CD4-positive, alpha-beta T cell (primary cell): ENCODE measurements at regions of chr12 and their contacts with region 1.

Region 1: DNA sequence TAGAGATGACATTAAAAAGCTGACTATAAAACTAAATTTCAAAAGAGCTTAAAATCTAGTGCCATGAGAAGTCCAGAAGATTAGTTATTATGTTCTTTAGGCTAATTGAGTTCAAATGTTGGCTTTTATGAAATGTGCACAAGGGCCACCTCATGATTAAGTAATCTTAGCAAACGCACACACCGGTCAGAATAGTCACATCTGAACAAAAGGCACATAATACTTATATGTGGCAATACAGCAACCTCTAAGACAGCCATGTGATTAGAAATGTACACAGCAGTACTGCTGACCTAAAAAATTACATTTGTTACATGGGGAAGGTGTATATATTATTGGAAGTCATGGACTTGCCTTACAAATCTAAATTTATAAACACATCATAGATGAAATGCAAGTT is 344.7 kb upstream of the GARIN6 start:
- DNase-seq: no peak
- ATAC-seq: no peak
- H3K4me3 ChIP-seq: no peak overlapping the region
- H3K4me3 Mint-ChIP-seq: no peak overlapping the region
- H3K27ac ChIP-seq: no peak overlapping the region
- H3K27ac Mint-ChIP-seq: no peak overlapping the region
- H3K4me1 ChIP-seq: no peaks in the 10 kb centered on the region
- H3K4me1 Mint-ChIP-seq: no peaks in the 10 kb centered on the region
- H3K27me3 ChIP-seq: no peaks in the 10 kb centered on the region
- H3K27me3 Mint-ChIP-seq: no peaks in the 10 kb centered on the region
- CTCF ChIP-seq: no peak

Region 2: GRCh38 chr12:99271071-99271470 is 31.8 kb before region 1 on chr12:
- CTCF ChIA-PET with region 1: no interaction called
- POLR2A ChIA-PET with region 1: no interaction called
- intact Hi-C with region 1: loop called in 1 of 2 experiments (anchors 2 kb)
- DNase-seq: no peak
- ATAC-seq: no peak
- H3K4me3 ChIP-seq: no peak overlapping the region
- H3K4me3 Mint-ChIP-seq: no peak overlapping the region
- H3K27ac ChIP-seq: no peak overlapping the region
- H3K27ac Mint-ChIP-seq: no peak overlapping the region
- H3K4me1 ChIP-seq: no peaks in the 10 kb centered on the region
- H3K4me1 Mint-ChIP-seq: no peaks in the 10 kb centered on the region
- H3K27me3 ChIP-seq: no peaks in the 10 kb centered on the region
- H3K27me3 Mint-ChIP-seq: no peaks in the 10 kb centered on the region
- CTCF ChIP-seq: no peak